ENCODE measurements at regions of chr11 and their contacts with region 1.

Region 1: GRCh38 chr11:22875869-22876473 is 15.7 kb upstream of the CCDC179 start:
- DNase-seq: peak; percentile 38
- ATAC-seq: peak; percentile 100
- H3K4me3 ChIP-seq: no peak overlapping the region
- H3K27ac ChIP-seq: no peak overlapping the region
- H3K4me1 ChIP-seq: no peaks in the 10 kb centered on the region
- H3K27me3 ChIP-seq: no peaks in the 10 kb centered on the region
- CTCF ChIP-seq: peak; percentile 54 to 89 (median 68)
- EP300 ChIP-seq: no peak
- POLR2A ChIP-seq: no peak
- RAD21 ChIP-seq: peak; percentile 83

Region 2: DNA sequence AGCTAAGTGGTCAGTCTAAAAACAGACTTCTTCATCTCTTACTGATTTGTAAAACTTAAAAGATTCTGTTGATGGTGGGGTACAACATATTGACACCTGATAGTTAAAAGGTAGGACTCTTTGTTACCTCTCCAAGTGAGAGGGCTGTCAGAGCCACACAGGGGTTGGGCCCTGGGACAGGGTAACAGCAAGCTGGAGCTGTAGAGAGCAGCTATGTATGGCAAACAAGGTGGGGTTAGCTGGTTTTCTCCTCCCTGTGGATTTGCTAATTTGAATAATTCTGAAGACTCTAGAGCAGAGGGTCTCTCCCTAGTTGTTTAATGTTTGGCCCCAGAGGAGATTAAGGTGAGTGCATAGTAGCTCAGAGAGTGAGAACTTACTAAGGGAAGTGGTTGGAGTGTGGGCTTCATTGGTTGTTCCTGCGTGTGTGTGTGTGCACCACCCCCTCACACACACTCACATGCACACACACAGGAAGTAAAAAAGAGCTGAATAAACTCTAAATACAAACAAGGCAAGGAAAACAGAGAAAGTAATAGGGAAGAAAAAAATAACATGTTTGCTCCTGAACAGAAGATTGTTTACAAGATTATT is 218.8 kb before region 1 on chr11:
- CTCF ChIA-PET with region 1: no interaction called
- POLR2A ChIA-PET with region 1: no interaction called
- RAD21 ChIA-PET with region 1: no interaction called
- SMC1A ChIA-PET with region 1: no interaction called
- in situ Hi-C with region 1: no loop called
- intact Hi-C with region 1: no loop called
- DNase-seq: no peak
- ATAC-seq: peak; percentile 92
- H3K4me3 ChIP-seq: no peak overlapping the region
- H3K27ac ChIP-seq: peak overlapping the region; percentile 42; the same call in 1 of the 2 replicates
- H3K4me1 ChIP-seq: peaks cover 6% of the 10 kb centered on the region
- H3K27me3 ChIP-seq: no peaks in the 10 kb centered on the region
- CTCF ChIP-seq: no peak
- EP300 ChIP-seq: peak in 1 of 2 experiments; percentile 46; a peak in 2 of 4 replicates
- POLR2A ChIP-seq: no peak
- RAD21 ChIP-seq: no peak

Region 3: DNA sequence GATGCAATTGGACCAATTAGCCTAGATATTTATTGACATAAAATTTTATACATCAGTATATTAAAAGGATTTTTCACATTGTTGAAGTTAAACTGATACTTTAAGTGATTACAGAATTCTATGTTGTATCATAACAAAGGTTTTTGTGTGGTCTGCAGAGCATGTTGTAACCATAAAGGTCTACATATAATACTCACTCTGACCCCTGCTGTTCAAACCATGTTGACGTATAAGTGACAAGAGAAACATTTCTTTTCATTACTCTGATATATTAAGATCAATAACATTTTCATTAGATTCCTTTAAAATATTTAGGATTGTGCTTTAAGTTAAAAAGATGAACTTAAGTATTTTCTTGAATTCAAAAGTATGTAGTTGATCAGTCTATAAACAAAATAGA is 145.7 kb before region 1 on chr11:
- CTCF ChIA-PET with region 1: no interaction called
- POLR2A ChIA-PET with region 1: no interaction called
- RAD21 ChIA-PET with region 1: no interaction called
- SMC1A ChIA-PET with region 1: no interaction called
- in situ Hi-C with region 1: no loop called
- intact Hi-C with region 1: no loop called
- DNase-seq: no peak
- ATAC-seq: peak; percentile 88
- H3K4me3 ChIP-seq: no peak overlapping the region
- H3K27ac ChIP-seq: no peak overlapping the region
- H3K4me1 ChIP-seq: no peaks in the 10 kb centered on the region
- H3K27me3 ChIP-seq: no peaks in the 10 kb centered on the region
- CTCF ChIP-seq: peak; percentile 4 to 53 (median 9); a peak in 2 of 6 replicates
- EP300 ChIP-seq: no peak
- POLR2A ChIP-seq: no peak
- RAD21 ChIP-seq: peak; percentile 58

Region 4: GRCh38 chr11:22795914-22796313 is 80.1 kb before region 1 on chr11:
- CTCF ChIA-PET with region 1: no interaction called
- POLR2A ChIA-PET with region 1: no interaction called
- RAD21 ChIA-PET with region 1: no interaction called
- SMC1A ChIA-PET with region 1: no interaction called
- in situ Hi-C with region 1: no loop called
- intact Hi-C with region 1: no loop called
- DNase-seq: no peak
- ATAC-seq: no peak
- H3K4me3 ChIP-seq: no peak overlapping the region
- H3K27ac ChIP-seq: no peak overlapping the region
- H3K4me1 ChIP-seq: no peaks in the 10 kb centered on the region
- H3K27me3 ChIP-seq: no peaks in the 10 kb centered on the region
- CTCF ChIP-seq: no peak
- EP300 ChIP-seq: no peak
- POLR2A ChIP-seq: no peak
- RAD21 ChIP-seq: no peak

Region 5: GRCh38 chr11:22829231-22830081 is 46.5 kb before region 1 on chr11 and contains the start of gene SVIP:
- CTCF ChIA-PET with region 1: interaction called, 16 read pairs
- POLR2A ChIA-PET with region 1: no interaction called
- RAD21 ChIA-PET with region 1: interaction called, 7 read pairs
- SMC1A ChIA-PET with region 1: interaction called, 6 read pairs
- in situ Hi-C with region 1: no loop called
- intact Hi-C with region 1: no loop called
- DNase-seq: peak; percentile 69
- ATAC-seq: peak; percentile 94
- H3K4me3 ChIP-seq: peak within 1 kb of the TSS; percentile 87
- H3K27ac ChIP-seq: peak within 1 kb of the TSS; percentile 59
- H3K4me1 ChIP-seq: no peaks in the 10 kb centered on the region
- H3K27me3 ChIP-seq: no peaks in the 10 kb centered on the region
- CTCF ChIP-seq: peak; percentile 76 to 92 (median 89)
- EP300 ChIP-seq: no peak
- POLR2A ChIP-seq: peak; percentile 91
- RAD21 ChIP-seq: peak; percentile 56
- polyA plus RNA-seq, gene SVIP: 59.0 to 78.0 TPM

Region 6: DNA sequence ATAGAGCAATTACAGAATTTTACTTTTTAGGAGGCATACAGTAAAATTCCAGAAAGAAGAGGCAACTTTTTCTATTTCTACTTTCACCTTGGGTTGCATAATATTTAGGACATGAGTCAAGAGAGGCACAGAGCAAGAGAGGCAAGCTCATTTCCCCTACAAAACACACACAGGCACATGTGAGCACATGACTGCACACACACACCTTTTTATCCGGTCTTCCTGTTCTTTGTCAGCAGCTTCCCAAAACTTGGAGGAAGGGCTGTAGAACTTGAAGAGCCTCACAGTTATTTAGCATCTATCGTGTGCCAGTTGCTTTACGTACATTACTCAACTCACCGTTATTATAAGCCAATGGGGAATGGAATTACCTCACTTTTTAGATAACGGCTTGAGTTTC is 22.1 kb after region 1 on chr11:
- CTCF ChIA-PET with region 1: interaction called, 8 read pairs
- POLR2A ChIA-PET with region 1: no interaction called
- RAD21 ChIA-PET with region 1: interaction called, 9 read pairs
- SMC1A ChIA-PET with region 1: interaction called, 10 read pairs
- in situ Hi-C with region 1: no loop called
- intact Hi-C with region 1: no loop called
- DNase-seq: no peak
- ATAC-seq: no peak
- H3K4me3 ChIP-seq: no peak overlapping the region
- H3K27ac ChIP-seq: no peak overlapping the region
- H3K4me1 ChIP-seq: no peaks in the 10 kb centered on the region
- H3K27me3 ChIP-seq: no peaks in the 10 kb centered on the region
- CTCF ChIP-seq: no peak
- EP300 ChIP-seq: no peak
- POLR2A ChIP-seq: no peak
- RAD21 ChIP-seq: no peak

Region 7: DNA sequence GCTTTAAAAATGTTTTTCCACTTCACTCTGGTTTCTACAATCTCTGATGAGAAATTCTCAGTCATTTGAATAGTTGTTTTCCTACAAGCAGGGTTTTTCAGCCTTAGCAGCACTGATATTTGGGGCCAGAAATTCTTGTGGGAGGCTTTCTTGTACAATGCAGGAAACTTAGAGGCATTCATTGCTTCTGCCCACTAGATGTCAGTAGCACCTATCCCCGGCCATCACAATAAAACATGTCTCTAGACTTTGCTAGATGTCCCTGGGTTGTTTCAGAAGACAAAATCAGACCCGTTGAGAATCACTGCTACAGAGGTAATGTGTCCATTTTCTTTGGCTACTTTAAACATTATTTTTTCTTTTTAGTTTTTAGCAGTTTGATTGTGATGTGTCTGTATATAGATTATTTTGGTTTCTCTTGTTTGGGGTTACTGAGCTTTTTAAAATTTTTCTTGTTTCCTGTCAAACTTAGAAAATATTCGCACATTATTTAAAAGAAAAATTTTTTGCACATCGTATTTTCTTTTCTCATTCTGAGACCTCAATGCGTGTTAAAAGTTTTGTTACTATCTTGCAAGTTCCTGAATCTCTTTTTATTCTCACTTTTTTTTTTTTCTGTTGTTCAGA is 45.1 kb after region 1 on chr11:
- CTCF ChIA-PET with region 1: interaction called, 24 read pairs
- POLR2A ChIA-PET with region 1: no interaction called
- RAD21 ChIA-PET with region 1: interaction called, 3 read pairs
- SMC1A ChIA-PET with region 1: interaction called, 8 read pairs
- in situ Hi-C with region 1: no loop called
- intact Hi-C with region 1: no loop called
- DNase-seq: no peak
- ATAC-seq: peak; percentile 99
- H3K4me3 ChIP-seq: no peak overlapping the region
- H3K27ac ChIP-seq: no peak overlapping the region
- H3K4me1 ChIP-seq: no peaks in the 10 kb centered on the region
- H3K27me3 ChIP-seq: no peaks in the 10 kb centered on the region
- CTCF ChIP-seq: peak; percentile 73 to 76 (median 73)
- EP300 ChIP-seq: no peak
- POLR2A ChIP-seq: no peak
- RAD21 ChIP-seq: peak; percentile 68

Region 8: GRCh38 chr11:22928207-22928917 is 52.4 kb after region 1 on chr11:
- CTCF ChIA-PET with region 1: interaction called, 24 read pairs
- POLR2A ChIA-PET with region 1: no interaction called
- RAD21 ChIA-PET with region 1: interaction called, 10 read pairs
- SMC1A ChIA-PET with region 1: interaction called, 5 read pairs
- in situ Hi-C with region 1: no loop called
- intact Hi-C with region 1: no loop called
- DNase-seq: no peak
- ATAC-seq: no peak
- H3K4me3 ChIP-seq: no peak overlapping the region
- H3K27ac ChIP-seq: no peak overlapping the region
- H3K4me1 ChIP-seq: no peaks in the 10 kb centered on the region; the same call in 1 of the 2 replicates
- H3K27me3 ChIP-seq: no peaks in the 10 kb centered on the region
- CTCF ChIP-seq: peak in 2 of 3 experiments; percentile 4 to 21; a peak in 1 of 6 replicates
- EP300 ChIP-seq: no peak
- POLR2A ChIP-seq: no peak
- RAD21 ChIP-seq: no peak

Region 9: GRCh38 chr11:23540101-23540561 is 664.2 kb after region 1 on chr11:
- CTCF ChIA-PET with region 1: interaction called, 23 read pairs
- POLR2A ChIA-PET with region 1: no interaction called
- RAD21 ChIA-PET with region 1: interaction called, 4 read pairs
- SMC1A ChIA-PET with region 1: interaction called, 6 read pairs
- in situ Hi-C with region 1: no loop called
- intact Hi-C with region 1: loop called (anchors 10 kb)
- DNase-seq: peak; percentile 5
- ATAC-seq: peak; percentile 96
- H3K4me3 ChIP-seq: no peak overlapping the region
- H3K27ac ChIP-seq: no peak overlapping the region
- H3K4me1 ChIP-seq: no peaks in the 10 kb centered on the region
- H3K27me3 ChIP-seq: no peaks in the 10 kb centered on the region
- CTCF ChIP-seq: peak; percentile 68 to 77 (median 72)
- EP300 ChIP-seq: no peak
- POLR2A ChIP-seq: no peak
- RAD21 ChIP-seq: peak; percentile 70

Measured in GM12878 (cell line).